GM12878 (cell line): ENCODE measurements at regions of chr1 and their contacts with region 1.

Region 1: GRCh38 chr1:109527098-109527811 is 12.4 kb upstream of the GPR61 start:
- DNase-seq: no peak
- ATAC-seq: peak; percentile 87
- H3K4me3 ChIP-seq: no peak overlapping the region
- H3K27ac ChIP-seq: peak overlapping the region; percentile 28; the same call in 1 of the 2 replicates
- H3K4me1 ChIP-seq: peaks cover 19% of the 10 kb centered on the region
- H3K27me3 ChIP-seq: peaks cover 0 to 2% of the 10 kb centered on the region in 2 experiments; a peak in 1 of 4 replicates
- CTCF ChIP-seq: no peak
- EP300 ChIP-seq: peak in 1 of 2 experiments; percentile 60; a peak in 1 of 4 replicates
- POLR2A ChIP-seq: no peak
- RAD21 ChIP-seq: no peak

Region 2: DNA sequence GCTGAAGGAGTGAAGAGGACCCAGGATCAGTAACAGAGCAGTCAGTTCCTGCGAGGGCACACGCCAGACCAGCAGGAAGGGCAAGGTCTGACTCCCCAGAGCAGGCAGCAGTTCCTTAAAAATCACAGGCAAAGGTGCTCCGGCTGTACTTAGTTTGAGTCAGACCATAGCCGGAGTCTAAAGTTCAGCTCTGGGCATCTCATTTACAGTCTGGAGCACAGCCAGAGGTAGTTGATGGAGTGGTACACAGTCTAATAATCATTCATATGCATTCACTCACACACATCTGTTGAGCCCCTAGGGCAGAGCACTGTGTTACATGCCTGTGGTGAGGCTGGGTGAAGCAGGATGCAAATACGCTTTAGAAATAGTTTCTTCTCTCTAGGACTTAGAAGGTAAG is 10.4 kb before region 1 on chr1:
- CTCF ChIA-PET with region 1: interaction called, 1,280 read pairs
- POLR2A ChIA-PET with region 1: interaction called, 10 read pairs
- RAD21 ChIA-PET with region 1: interaction called, 21 read pairs
- SMC1A ChIA-PET with region 1: interaction called, 205 read pairs
- in situ Hi-C with region 1: no loop called
- intact Hi-C with region 1: no loop called
- DNase-seq: no peak
- ATAC-seq: no peak
- H3K4me3 ChIP-seq: no peak overlapping the region
- H3K27ac ChIP-seq: no peak overlapping the region
- H3K4me1 ChIP-seq: no peaks in the 10 kb centered on the region
- H3K27me3 ChIP-seq: no peaks in the 10 kb centered on the region; a peak in 2 of 4 replicates
- CTCF ChIP-seq: no peak
- EP300 ChIP-seq: no peak
- POLR2A ChIP-seq: no peak
- RAD21 ChIP-seq: no peak